RWPE1 (cell line): ENCODE measurements at regions of chr19 and their contacts with region 1.

Region 1: GRCh38 chr19:44723952-44724319 is 24.6 kb upstream of the BCL3 start:
- DNase-seq: peak; percentile 76
- H3K27ac ChIP-seq: peak overlapping the region; percentile 60
- CTCF ChIP-seq: peak; percentile 96

Region 2: DNA sequence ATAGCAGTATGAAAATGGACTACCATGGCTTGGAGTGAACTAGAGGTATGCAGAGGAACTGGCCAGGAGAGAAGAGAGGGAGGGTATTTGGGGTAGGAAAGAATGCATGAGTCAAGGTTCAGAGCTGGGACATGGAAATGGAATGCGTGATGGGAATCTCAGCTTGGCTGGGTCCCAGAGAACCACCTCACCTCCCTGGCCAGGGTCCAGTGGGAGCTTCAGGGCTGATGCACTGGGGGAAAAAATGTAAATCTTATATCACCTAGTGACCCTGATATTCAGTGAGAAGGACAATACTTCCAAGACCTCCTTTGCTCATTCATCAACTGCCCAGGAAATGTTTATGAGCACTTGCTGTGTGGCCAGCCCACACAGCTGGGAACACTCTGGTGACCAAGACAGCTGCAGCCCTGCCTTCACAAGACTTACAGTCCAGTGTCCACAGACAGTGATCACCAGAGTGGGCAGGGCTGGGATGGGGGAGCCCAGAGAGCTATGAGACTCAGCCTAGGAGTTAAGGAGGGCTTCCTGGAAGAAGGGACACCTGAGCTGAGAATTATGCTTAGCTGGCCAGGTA is 97.8 kb before region 1 on chr19:
- CTCF ChIA-PET with region 1: no interaction called
- POLR2A ChIA-PET with region 1: no interaction called
- DNase-seq: peak; percentile 91
- H3K27ac ChIP-seq: peak overlapping the region; percentile 75
- CTCF ChIP-seq: no peak

Region 3: DNA sequence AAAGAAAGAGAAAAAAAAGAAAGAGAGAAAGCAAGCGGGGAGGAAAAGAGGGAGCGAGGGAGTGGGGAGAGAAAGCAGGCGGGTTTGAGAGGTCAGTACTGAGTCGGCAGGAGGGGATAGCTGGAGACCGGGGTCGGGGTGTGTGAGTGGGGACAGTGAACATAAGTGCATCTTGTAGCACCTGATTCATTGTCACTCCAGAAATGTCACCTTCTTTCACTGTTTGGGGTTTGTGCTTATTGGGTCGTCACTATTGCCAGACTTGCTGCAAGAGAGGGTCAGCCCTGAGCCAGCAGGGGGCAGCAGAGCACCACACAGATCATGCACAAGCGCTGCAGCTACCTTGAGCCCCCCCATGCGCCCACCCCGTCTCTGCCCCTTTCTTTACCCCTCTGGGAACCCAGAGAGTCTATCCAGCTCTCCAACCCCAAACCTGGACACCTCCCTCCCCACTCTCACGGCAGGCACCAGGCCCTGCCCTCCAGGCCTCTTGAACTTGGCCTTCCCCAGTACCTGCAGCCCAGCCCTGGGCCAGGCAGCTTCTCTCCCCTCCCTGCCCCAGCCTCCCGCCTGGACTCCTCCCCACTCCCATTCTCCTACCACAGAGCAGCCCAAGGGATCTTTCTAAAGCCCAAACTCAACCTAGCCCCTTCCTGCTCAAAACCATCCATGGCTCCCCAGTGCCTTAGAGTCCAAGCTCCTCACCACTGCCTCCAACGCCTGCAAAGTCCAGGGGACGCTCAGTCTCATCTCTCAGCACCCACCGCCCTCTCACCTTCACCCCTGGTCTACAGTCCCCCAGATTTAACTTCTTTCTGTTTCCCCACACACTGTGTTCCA is 34.7 kb before region 1 on chr19:
- CTCF ChIA-PET with region 1: interaction called, 18 read pairs
- POLR2A ChIA-PET with region 1: no interaction called
- DNase-seq: no peak
- H3K27ac ChIP-seq: peak overlapping the region; percentile 55
- CTCF ChIP-seq: peak; percentile 88

Region 4: DNA sequence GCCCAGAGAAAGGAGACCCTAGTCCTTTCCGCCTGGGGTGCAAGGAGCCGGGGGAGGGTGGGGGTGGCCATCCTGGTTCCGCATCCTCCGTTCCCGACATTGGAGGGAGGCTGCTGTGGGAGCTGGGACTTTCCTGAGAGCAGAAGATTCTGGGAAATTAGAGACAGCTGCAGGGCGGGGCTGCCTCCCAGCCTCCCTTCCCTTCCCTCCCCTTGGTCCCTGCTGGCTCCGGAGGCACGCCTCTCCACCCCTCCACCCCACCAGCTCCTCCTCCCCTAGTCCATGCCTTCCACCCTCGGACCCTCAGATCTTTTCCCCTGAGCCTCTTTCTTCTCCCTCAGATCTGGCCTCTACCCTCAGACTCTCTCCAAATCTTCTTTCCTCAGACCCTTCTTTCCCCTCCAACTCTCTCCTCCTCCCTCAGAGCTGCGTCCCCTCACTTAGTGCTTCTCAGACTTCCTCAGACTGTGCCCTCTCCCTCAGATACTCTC is 21.4 kb after region 1 on chr19:
- CTCF ChIA-PET with region 1: interaction called, 11 read pairs
- POLR2A ChIA-PET with region 1: interaction called, 3 read pairs
- DNase-seq: no peak
- H3K27ac ChIP-seq: peak overlapping the region; percentile 98
- CTCF ChIP-seq: no peak

Region 5: GRCh38 chr19:44752816-44753618 is 29.1 kb after region 1 on chr19:
- CTCF ChIA-PET with region 1: interaction called, 17 read pairs
- POLR2A ChIA-PET with region 1: interaction called, 3 read pairs
- DNase-seq: peak; percentile 93
- H3K27ac ChIP-seq: peak overlapping the region; percentile 100
- CTCF ChIP-seq: no peak

Region 6: GRCh38 chr19:44770550-44771257 is 46.8 kb after region 1 on chr19:
- CTCF ChIA-PET with region 1: interaction called, 106 read pairs
- POLR2A ChIA-PET with region 1: no interaction called
- DNase-seq: peak; percentile 99
- H3K27ac ChIP-seq: peak overlapping the region; percentile 73
- CTCF ChIP-seq: peak; percentile 71

Region 7: DNA sequence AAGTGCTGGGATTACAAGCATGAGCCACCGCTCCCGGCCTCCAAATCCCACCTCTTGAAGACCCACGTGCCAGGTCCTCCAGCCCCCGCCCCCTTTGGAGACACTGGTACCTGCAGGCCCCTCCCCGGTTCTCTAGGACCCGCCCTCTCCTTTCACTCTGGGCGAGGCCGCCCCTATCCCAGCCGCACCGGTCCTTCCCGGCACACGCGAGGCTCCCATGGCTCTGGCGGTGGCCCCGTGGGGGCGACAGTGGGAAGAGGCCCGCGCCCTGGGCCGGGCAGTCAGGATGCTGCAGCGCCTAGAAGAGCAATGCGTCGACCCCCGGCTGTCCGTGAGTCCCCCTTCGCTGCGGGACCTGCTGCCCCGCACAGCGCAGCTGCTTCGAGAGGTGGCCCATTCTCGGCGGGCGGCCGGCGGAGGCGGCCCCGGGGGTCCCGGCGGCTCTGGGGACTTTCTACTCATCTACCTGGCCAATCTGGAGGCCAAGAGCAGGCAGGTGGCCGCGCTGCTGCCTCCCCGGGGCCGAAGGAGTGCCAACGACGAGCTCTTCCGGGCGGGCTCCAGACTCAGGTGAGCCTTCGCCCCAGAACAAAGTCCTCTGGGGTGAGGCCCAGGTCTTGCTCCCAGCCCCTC is 53.9 kb after region 1 on chr19 and contains the start of gene CBLC:
- CTCF ChIA-PET with region 1: interaction called, 106 read pairs
- POLR2A ChIA-PET with region 1: no interaction called
- DNase-seq: peak; percentile 93
- H3K27ac ChIP-seq: peak within 1 kb of the TSS; percentile 91
- CTCF ChIP-seq: no peak

Region 8: DNA sequence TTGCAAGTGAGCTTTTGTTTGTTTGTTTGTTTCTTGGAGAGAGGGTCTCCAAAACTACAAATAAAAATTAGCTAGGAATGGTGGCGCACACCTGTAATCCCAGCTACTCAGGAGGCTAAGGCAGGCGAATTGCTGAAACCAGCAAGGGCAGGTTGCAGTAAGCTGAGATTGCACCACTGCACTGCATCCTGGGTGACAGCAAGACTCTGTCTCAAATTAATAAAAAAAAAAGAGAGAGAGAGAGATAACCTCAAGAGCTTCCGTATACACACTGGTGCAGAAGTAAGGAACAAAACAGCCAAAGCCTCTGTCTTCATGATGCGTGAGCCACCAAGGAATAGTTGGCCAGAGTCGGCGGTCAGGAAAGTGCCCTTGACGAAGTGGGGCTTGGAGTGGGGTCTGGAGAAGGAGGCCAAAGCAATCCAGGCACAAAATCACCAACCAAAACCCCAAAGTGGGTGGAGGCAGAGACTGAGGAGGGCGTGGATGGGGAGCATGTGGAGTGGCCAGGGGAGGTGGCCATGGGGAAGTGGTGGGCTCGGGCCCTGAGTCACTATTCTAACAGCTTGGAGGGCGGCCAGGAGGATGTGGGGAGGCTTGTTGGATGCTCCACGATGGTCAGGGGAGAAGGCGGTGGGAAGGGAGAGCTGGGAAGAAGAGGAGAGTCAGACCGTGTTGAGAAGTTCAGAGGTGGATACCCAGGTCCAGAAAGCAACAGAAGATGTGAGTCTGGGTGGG is 146.0 kb after region 1 on chr19:
- CTCF ChIA-PET with region 1: no interaction called
- POLR2A ChIA-PET with region 1: no interaction called
- DNase-seq: no peak
- H3K27ac ChIP-seq: peak overlapping the region; percentile 43; the same call in 1 of the 2 replicates
- CTCF ChIP-seq: no peak

Region 9: DNA sequence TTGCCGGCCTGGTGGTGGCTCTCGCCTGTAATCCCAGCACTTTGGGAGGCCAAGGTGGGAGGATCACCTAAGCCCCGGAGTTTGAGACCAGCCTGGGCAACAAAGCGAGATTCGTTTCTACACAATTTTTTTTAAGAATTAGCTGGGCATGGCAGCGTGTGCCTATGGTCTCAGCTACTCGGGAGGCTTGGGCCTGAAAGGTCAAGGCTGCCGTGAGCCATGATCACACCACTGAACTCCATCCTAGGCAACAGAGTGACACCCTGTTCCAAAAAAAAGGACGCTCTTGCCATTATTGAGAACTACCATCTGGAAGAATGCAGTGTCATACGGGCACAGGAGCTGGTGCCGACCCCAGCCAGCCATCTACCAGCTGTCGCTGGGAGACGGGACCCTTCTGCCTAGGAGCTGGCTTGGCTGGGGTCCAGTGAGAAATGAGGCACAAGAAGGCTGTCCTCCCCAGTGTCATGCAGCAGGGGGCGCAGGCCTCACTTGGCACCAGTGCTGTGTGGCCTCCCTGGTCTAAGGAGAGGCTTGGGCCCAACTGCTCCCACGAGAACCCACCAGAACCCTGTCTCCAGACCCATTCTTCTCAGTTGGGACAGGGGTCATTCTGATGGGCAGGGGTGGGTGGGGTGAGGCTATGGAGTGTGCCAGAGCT is 265.1 kb after region 1 on chr19:
- CTCF ChIA-PET with region 1: no interaction called
- POLR2A ChIA-PET with region 1: no interaction called
- DNase-seq: peak; percentile 21
- H3K27ac ChIP-seq: no peak overlapping the region
- CTCF ChIP-seq: peak; percentile 55